ENCODE measurements at regions of chr10 and their contacts with region 1.

Region 1: GRCh38 chr10:70461215-70461986 is 17.2 kb upstream of the PALD1 start:
- DNase-seq: peak in 1 of 2 experiments; percentile 64
- H3K4me3 ChIP-seq: no peak overlapping the region
- H3K27ac ChIP-seq: no peak overlapping the region
- H3K4me1 ChIP-seq: peaks cover 14% of the 10 kb centered on the region; the same call in 1 of the 2 replicates
- H3K27me3 ChIP-seq: peaks cover 17% of the 10 kb centered on the region; the same call in 1 of the 2 replicates
- CTCF ChIP-seq: peak; percentile 95

Region 2: DNA sequence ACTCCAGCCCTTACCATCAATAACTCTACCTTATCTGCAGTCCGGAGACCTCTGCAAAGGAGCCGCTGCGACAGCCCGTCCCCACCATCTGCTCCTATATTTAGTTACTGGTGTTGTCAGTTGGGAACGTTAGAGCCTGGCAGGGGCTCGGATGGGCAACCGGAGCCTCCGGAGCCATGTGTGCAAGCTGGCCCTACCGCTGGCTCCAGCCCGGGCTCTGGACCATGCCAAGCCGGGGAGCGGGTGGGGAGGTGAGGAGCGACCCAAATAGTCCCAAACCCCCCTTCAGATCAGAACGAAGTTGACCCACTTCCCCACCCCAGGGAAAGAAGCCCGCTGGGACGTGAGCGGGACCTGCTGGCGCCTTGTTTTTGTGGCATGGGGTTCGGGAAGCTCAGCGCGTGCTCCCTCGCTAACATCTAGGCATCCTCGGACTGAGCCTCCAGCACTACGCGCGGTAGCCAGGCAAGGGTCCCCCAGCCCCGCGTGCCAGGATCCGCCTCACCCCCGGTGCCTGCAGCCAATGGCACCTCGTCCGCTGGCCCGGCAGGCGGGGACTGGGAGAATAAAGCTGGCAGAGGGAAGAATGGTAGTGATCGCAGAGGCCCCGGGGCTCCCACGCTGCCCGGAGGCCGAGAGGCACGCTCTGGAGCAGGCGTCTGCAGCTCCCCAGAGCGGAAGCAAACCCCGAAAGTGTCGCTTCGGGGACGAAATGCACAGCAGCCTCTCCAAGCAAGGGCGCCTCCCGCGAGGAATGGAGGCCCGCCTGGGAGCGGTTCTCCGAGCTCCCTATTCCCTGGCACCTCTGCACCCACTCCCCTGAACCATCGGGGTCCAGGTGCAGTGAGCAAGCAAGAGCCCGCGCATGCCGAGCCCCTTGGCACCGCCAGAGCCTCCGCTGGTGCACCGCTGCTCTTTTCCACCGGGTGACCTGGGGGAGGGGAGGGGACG is 79.7 kb before region 1 on chr10:
- CTCF ChIA-PET with region 1: interaction called, 11 read pairs
- POLR2A ChIA-PET with region 1: no interaction called
- intact Hi-C with region 1: no loop called
- DNase-seq: peak in 1 of 2 experiments; percentile 52
- H3K4me3 ChIP-seq: peak overlapping the region; percentile 89
- H3K27ac ChIP-seq: no peak overlapping the region
- H3K4me1 ChIP-seq: peaks cover 29% of the 10 kb centered on the region
- H3K27me3 ChIP-seq: no peaks in the 10 kb centered on the region
- CTCF ChIP-seq: no peak

Region 3: GRCh38 chr10:70537344-70538209 is 76.2 kb after region 1 on chr10:
- CTCF ChIA-PET with region 1: interaction called, 3 read pairs
- POLR2A ChIA-PET with region 1: no interaction called
- intact Hi-C with region 1: loop called (anchors 1 kb)
- DNase-seq: peak in 1 of 2 experiments; percentile 61
- H3K4me3 ChIP-seq: no peak overlapping the region
- H3K27ac ChIP-seq: no peak overlapping the region
- H3K4me1 ChIP-seq: no peaks in the 10 kb centered on the region
- H3K27me3 ChIP-seq: no peaks in the 10 kb centered on the region
- CTCF ChIP-seq: peak; percentile 73

Region 4: GRCh38 chr10:70714245-70714644 is 252.8 kb after region 1 on chr10:
- CTCF ChIA-PET with region 1: interaction called, 13 read pairs
- POLR2A ChIA-PET with region 1: no interaction called
- intact Hi-C with region 1: no loop called
- DNase-seq: no peak
- H3K4me3 ChIP-seq: no peak overlapping the region
- H3K27ac ChIP-seq: no peak overlapping the region
- H3K4me1 ChIP-seq: peaks cover 31% of the 10 kb centered on the region
- H3K27me3 ChIP-seq: no peaks in the 10 kb centered on the region
- CTCF ChIP-seq: no peak

Region 5: DNA sequence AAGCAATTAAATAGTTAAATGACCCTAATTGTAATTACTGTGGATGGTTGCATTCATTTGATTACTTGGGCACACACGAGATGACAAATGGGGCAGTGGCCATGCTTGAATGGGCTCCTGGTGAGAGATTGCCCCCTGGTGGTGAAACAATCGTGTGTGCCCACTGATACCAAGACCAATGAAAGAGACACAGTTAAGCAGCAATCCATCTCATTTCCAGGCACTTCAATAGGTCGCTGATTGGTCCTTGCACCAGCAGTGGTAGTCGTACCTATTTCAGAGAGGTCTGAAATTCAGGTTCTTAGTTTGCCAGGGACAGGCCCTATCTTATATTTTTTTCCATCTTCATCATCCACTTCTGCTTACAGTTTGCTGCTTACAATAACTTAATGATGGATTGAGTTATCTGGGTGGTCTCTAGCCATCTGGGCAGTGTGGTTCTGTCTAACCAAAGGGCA is 418.7 kb after region 1 on chr10:
- CTCF ChIA-PET with region 1: interaction called, 14 read pairs
- POLR2A ChIA-PET with region 1: no interaction called
- intact Hi-C with region 1: loop called (anchors 1 kb)
- DNase-seq: peak; percentile 59 to 76
- H3K4me3 ChIP-seq: no peak overlapping the region
- H3K27ac ChIP-seq: no peak overlapping the region
- H3K4me1 ChIP-seq: 0 out of 2 replicates have a peak, but pooled peaks cover 8% of the 10 kb centered on the region
- H3K27me3 ChIP-seq: no peaks in the 10 kb centered on the region
- CTCF ChIP-seq: peak; percentile 97

Region 6: GRCh38 chr10:71285180-71285545 is 823.8 kb after region 1 on chr10:
- CTCF ChIA-PET with region 1: no interaction called
- POLR2A ChIA-PET with region 1: no interaction called
- intact Hi-C with region 1: loop called (anchors 5 kb)
- DNase-seq: peak; percentile 41 to 55
- H3K4me3 ChIP-seq: no peak overlapping the region
- H3K27ac ChIP-seq: no peak overlapping the region
- H3K4me1 ChIP-seq: no peaks in the 10 kb centered on the region
- H3K27me3 ChIP-seq: no peaks in the 10 kb centered on the region
- CTCF ChIP-seq: peak; percentile 91